Heart right ventricle (tissue), 16 donors: ENCODE measurements at regions of chr12 and their contacts with region 1.

Region 1: DNA sequence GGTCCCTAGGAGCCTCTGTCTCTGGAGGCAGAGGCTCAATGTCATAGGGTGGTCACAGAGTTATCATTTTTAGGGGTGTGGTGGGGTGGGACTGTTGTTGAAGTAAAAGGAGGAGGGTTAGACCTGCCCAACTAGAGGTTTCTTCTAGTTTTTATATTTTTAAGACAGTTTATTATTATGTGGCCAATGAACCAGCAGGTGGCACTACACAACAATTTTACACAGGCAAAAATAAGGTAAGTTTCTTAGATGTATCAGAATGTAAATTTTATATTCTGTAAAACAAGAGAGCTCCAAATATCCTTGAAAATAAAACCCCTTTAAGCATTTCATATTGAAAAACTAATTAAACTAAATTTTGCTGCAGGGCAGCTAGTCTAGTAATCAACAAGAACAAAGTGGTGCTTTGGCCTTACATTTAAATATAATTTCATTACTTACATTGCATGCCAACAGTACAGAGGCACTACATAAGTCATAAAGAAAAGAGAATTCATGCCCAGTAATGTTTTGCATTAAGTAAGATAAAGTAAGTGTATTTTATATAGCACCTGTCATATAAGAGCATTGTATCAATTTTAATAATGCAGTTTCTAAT is 22.2 kb upstream of the OVCH1 start:
- DNase-seq: peak in 1 of 2 donors; percentile 18
- ATAC-seq: peak in 1 of 8 donors; percentile 29
- H3K4me3 ChIP-seq: no peak overlapping the region
- H3K27ac ChIP-seq: no peak overlapping the region
- H3K4me1 ChIP-seq: peaks cover 0 to 7% (median 0%) of the 10 kb centered on the region in 9 donors
- H3K27me3 ChIP-seq: no peaks in the 10 kb centered on the region
- CTCF ChIP-seq: peak; percentile 43 to 76 (median 67)

Region 2: DNA sequence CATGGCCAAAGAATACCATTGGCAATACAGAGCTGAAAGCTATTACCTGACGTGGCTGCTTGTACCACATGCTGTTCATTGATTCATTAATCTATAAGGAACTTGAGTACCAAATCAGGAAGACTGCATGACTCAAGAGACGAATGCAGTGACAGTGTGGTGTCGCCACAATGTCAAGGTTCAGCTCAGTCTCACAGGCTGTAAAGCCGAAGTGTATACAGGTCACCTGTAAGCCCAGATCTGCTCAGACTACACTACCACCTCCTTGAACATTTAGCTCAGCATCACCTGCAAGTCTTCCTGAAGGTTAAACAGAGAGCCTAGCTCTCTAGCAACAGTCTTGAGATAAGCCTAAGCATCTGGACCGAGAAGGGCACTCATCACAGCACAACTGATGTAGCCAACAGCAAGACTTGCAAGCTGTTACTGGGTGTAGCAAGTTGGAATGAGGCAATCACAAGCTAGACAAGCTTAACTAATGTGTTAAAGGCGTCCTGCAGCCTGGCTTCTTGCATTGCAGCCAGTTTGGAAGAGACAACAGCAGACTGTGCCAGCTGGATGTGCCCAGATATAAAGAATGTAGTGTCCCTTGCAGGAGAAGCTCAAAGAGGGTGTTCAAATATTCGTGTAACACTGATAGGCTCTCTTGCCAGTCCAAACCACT is 243.1 kb after region 1 on chr12:
- intact Hi-C with region 1: no loop called
- DNase-seq: peak; percentile 38 to 57
- ATAC-seq: peak; percentile 38 to 97 (median 95)
- H3K4me3 ChIP-seq: no peak overlapping the region
- H3K27ac ChIP-seq: peak overlapping the region in 6 of 10 donors; percentile 7 to 70 (median 18)
- H3K4me1 ChIP-seq: peaks cover 0 to 28% (median 19%) of the 10 kb centered on the region in 9 donors
- H3K27me3 ChIP-seq: no peaks in the 10 kb centered on the region
- CTCF ChIP-seq: no peak

Region 3: GRCh38 chr12:29889737-29890136 is 370.1 kb after region 1 on chr12:
- intact Hi-C with region 1: loop called in 2 of 10 experiments (anchors 5 to 10 kb)
- DNase-seq: peak in 1 of 2 donors; percentile 75
- ATAC-seq: peak in 2 of 8 donors; percentile 41 to 48
- H3K4me3 ChIP-seq: no peak overlapping the region
- H3K27ac ChIP-seq: no peak overlapping the region
- H3K4me1 ChIP-seq: no peaks in the 10 kb centered on the region
- H3K27me3 ChIP-seq: no peaks in the 10 kb centered on the region
- CTCF ChIP-seq: peak; percentile 35 to 72 (median 62)

Region 4: GRCh38 chr12:30286345-30286926 is 766.8 kb after region 1 on chr12:
- intact Hi-C with region 1: loop called in 2 of 10 experiments (anchors 10 kb)
- DNase-seq: no peak
- ATAC-seq: no peak
- H3K4me3 ChIP-seq: no peak overlapping the region
- H3K27ac ChIP-seq: no peak overlapping the region
- H3K4me1 ChIP-seq: no peaks in the 10 kb centered on the region
- H3K27me3 ChIP-seq: no peaks in the 10 kb centered on the region
- CTCF ChIP-seq: peak in 7 of 9 donors; percentile 30 to 58 (median 48)

Region 5: GRCh38 chr12:30515351-30515750 is 995.7 kb after region 1 on chr12:
- intact Hi-C with region 1: loop called in 3 of 10 experiments (anchors 10 kb)
- DNase-seq: no peak
- ATAC-seq: peak in 1 of 8 donors; percentile 47
- H3K4me3 ChIP-seq: no peak overlapping the region
- H3K27ac ChIP-seq: no peak overlapping the region
- H3K4me1 ChIP-seq: peaks cover 0 to 8% (median 0%) of the 10 kb centered on the region in 9 donors
- H3K27me3 ChIP-seq: no peaks in the 10 kb centered on the region
- CTCF ChIP-seq: peak in 8 of 9 donors; percentile 14 to 57 (median 35)

Region 6: DNA sequence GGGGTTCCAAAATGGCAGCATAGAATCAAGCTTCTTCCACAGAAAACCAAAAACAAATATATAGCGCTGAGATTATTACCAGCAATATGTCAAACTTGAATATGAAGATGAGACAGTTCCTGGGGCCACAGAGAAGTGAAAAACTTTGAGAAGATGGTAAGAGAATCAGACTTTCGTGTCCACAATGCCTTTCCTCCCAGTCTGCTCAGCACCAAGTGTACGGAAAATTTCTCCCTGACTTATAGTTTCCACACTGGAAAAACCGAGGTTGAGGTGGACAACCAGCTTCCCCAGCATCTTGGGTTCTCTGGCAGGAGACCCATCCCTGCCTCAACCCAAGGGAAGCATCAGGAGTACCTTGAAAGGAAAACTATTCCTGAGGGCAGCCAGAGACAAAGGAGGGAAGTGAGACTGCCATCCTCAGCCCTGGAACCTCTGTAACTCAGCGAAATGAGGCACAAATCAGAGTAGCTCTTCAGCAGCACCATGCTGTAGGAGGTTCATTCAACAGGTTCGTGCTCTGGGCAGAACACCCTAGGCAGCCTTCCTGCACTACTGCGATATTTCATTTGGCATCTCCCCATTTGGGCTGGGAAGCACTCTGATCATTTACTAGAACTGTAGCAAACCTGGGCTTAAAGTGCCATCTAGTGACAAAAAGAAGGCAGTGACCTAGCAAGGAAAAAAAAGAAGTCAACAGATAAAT is 1287.5 kb after region 1 on chr12:
- intact Hi-C with region 1: loop called in 7 of 10 experiments (anchors 10 kb)
- DNase-seq: peak in 1 of 2 donors; percentile 52
- ATAC-seq: peak; percentile 78 to 94 (median 86)
- H3K4me3 ChIP-seq: no peak overlapping the region
- H3K27ac ChIP-seq: no peak overlapping the region
- H3K4me1 ChIP-seq: peaks cover 0 to 4% (median 0%) of the 10 kb centered on the region in 9 donors
- H3K27me3 ChIP-seq: no peaks in the 10 kb centered on the region
- CTCF ChIP-seq: peak; percentile 57 to 83 (median 80)

Region 7: GRCh38 chr12:30813525-30814294 is 1294.0 kb after region 1 on chr12:
- intact Hi-C with region 1: loop called in 7 of 10 experiments (anchors 10 kb)
- DNase-seq: no peak
- ATAC-seq: no peak
- H3K4me3 ChIP-seq: no peak overlapping the region
- H3K27ac ChIP-seq: no peak overlapping the region
- H3K4me1 ChIP-seq: peaks cover 0 to 2% (median 0%) of the 10 kb centered on the region in 9 donors
- H3K27me3 ChIP-seq: no peaks in the 10 kb centered on the region
- CTCF ChIP-seq: no peak